ENCODE measurements at regions of chr6 and their contacts with region 1.

Region 1: GRCh38 chr6:49332781-49333180 is 130.3 kb downstream of the MMUT start:
- DNase-seq: no peak
- H3K4me3 ChIP-seq: no peak overlapping the region
- H3K27ac ChIP-seq: no peak overlapping the region
- H3K4me1 ChIP-seq: no peaks in the 10 kb centered on the region
- H3K27me3 ChIP-seq: no peaks in the 10 kb centered on the region
- CTCF ChIP-seq: no peak
- EP300 ChIP-seq: no peak
- POLR2A ChIP-seq: no peak

Region 2: DNA sequence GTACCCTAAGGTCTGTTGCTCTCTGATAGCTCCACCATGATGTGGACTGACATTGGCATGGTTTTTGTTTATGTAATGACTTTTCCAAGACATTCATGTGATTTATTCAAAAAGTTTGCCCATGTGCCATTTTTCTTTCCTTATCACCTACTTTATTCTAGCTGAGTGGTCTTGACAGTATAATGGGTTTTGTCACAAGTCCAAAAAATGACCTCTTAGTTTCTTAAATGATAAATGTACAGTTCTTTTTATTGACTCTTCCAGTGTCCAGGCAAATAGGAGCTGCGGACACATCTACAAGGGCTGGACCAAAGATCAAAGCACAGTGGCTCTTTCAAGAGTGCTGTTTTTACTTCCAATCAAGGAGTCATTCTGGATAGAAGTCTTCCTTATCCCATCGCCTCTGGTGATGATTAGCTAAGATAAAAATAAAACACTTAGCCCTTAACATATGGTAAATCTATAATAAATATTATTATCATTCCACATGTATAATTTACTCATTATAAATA is 11.2 kb before region 1 on chr6:
- in situ Hi-C with region 1: no loop called
- intact Hi-C with region 1: loop called (anchors 1 kb)
- DNase-seq: no peak
- H3K4me3 ChIP-seq: no peak overlapping the region
- H3K27ac ChIP-seq: no peak overlapping the region
- H3K4me1 ChIP-seq: no peaks in the 10 kb centered on the region
- H3K27me3 ChIP-seq: no peaks in the 10 kb centered on the region
- CTCF ChIP-seq: no peak
- EP300 ChIP-seq: no peak
- POLR2A ChIP-seq: no peak